ENCODE measurements at regions of chr1 and their contacts with region 1.

Region 1: DNA sequence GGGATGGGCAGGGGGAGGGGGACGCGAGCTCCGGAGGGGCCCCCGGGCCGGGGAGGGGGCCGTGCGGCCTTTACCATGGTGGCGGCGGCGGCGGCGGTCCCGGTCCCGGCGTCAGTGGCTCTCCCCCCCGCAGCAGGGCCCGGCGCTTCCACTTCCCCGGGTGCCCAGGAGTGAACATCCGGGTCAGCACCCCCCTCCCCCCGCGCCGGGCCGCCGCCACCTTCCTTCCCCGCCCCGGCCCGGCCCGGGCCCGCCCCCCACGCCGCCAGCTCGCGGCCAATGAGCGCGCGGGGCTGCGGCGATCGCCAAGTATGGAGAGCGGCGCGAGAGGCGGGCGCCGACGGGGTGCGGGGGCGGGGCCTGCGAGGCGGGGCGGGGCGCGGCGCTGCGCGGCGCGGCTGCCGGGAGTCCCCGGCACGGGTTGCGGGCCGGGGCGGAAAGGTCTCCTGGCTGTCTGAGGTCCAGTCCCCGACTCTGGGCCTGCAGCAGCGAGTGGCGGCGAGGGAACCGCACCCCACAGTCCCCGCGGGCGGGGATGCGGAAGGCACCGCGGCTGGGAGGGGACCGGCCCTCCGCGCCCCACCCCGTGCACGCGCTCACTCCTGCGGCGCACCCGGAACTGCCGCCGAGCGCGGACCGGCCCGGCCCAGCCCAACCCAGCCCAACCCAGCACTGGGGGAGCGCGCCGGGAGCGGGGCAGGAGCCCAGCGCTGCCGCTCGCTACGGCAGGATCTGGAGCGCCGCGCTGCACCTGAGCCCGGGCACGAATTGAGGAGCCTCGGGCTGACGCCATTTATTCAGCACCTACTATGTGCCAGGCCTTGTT is at the start of gene CAPZB:
- DNase-seq: peak; percentile 57 to 90
- H3K4me3 ChIP-seq: peak within 1 kb of the TSS; percentile 75
- H3K27ac ChIP-seq: peak within 1 kb of the TSS; percentile 72
- H3K4me1 ChIP-seq: peaks cover 26% of the 10 kb centered on the region
- H3K27me3 ChIP-seq: no peaks in the 10 kb centered on the region
- CTCF ChIP-seq: no peak
- total RNA-seq, gene CAPZB: 222 and 274 TPM in 2 replicates

Region 2: DNA sequence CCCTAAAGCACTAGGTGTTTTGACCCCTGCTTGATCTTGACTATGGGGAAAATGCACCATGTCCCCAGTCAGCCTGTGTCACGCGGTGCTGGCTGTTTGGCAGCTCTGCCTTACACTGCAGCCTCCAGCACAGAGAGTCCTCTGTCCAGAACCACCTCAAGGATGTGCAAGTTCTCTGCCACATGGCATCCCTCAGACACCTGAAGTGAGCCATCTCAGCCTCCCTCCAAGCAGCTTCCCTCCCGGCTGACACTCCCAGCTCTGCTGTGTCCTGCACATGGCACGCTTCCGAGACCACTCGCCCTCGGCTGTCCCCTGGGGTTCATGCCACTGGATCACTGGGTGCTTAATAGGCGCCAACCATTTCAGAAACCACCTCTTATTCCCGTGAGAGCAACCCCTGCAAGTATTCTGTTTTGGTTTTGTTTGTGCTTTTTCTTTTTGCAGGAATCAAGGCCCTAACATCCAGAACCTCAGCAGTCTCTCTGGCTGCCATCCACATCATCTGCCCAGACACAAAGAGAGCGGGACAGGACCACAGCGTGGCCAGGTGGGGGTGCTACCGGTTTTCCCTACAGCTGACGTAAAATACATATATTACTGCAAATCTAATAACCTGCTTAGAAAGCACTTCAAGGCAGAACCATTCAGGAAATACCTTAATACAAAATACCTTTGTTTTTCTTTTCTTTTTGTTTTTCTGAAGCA is 46.0 kb before region 1 on chr1:
- CTCF ChIA-PET with region 1: no interaction called
- POLR2A ChIA-PET with region 1: interaction called, 18 read pairs
- intact Hi-C with region 1: no loop called
- DNase-seq: no peak
- H3K4me3 ChIP-seq: no peak overlapping the region
- H3K27ac ChIP-seq: no peak overlapping the region
- H3K4me1 ChIP-seq: peaks cover 14% of the 10 kb centered on the region
- H3K27me3 ChIP-seq: no peaks in the 10 kb centered on the region
- CTCF ChIP-seq: no peak

Region 3: DNA sequence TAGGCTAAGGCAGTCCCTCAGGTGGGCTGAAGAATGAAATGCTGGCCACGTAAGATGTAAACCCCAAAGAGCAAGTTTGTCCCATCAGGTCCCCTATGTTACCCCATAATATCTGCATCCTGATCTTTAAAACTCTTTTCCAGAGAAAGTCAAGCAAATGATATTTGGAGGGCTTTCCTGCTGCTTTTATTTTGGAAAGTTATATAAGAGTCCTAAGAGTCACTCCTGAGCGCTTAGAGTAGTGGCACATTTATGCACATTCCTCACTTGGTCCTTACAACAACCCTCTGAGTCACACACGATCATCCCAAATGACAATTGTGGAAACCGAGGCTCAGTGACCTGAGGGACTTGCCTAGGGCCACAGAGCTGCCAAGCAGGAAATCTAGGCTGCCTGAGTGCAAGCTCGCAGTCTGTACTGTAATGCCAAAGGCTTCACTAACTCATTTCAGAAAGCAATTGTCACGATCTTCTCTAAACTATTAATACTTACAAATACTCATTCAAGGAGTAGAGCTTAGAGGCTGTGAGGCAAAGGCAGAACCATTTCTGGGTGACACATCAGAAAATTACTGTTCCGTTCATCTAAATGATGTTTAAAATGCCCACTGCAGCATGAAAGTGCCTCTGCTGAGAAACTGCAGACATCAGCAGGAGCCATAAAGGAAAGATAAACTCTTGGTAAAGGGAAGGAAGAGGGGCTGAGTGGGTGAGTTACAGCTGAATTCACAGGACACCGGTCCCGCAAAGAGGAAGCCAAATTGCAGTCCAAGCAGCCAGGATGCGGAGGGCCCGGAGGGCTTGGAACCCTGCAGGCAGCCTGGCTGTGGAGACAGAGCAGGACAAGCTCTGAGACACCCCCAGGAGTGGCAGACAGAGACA is 31.1 kb before region 1 on chr1:
- CTCF ChIA-PET with region 1: no interaction called
- POLR2A ChIA-PET with region 1: no interaction called
- intact Hi-C with region 1: no loop called
- DNase-seq: no peak
- H3K4me3 ChIP-seq: no peak overlapping the region
- H3K27ac ChIP-seq: no peak overlapping the region
- H3K4me1 ChIP-seq: peaks cover 14% of the 10 kb centered on the region
- H3K27me3 ChIP-seq: no peaks in the 10 kb centered on the region
- CTCF ChIP-seq: no peak

Region 4: GRCh38 chr1:19468397-19468956 is 17.1 kb before region 1 on chr1:
- CTCF ChIA-PET with region 1: no interaction called
- POLR2A ChIA-PET with region 1: interaction called, 17 read pairs
- intact Hi-C with region 1: no loop called
- DNase-seq: peak in 1 of 2 experiments; percentile 48
- H3K4me3 ChIP-seq: no peak overlapping the region
- H3K27ac ChIP-seq: no peak overlapping the region
- H3K4me1 ChIP-seq: peaks cover 16% of the 10 kb centered on the region
- H3K27me3 ChIP-seq: no peaks in the 10 kb centered on the region
- CTCF ChIP-seq: no peak

Region 5: GRCh38 chr1:19596714-19597495 is 111.3 kb after region 1 on chr1:
- CTCF ChIA-PET with region 1: no interaction called
- POLR2A ChIA-PET with region 1: interaction called, 5 read pairs
- intact Hi-C with region 1: loop called (anchors 5 kb)
- DNase-seq: peak; percentile 92 to 94
- H3K4me3 ChIP-seq: peak overlapping the region; percentile 74
- H3K27ac ChIP-seq: peak overlapping the region; percentile 84
- H3K4me1 ChIP-seq: peaks cover 18% of the 10 kb centered on the region; the same call in 1 of the 2 replicates
- H3K27me3 ChIP-seq: no peaks in the 10 kb centered on the region
- CTCF ChIP-seq: no peak

Region 6: GRCh38 chr1:19793360-19794046 is 307.9 kb after region 1 on chr1:
- CTCF ChIA-PET with region 1: no interaction called
- POLR2A ChIA-PET with region 1: no interaction called
- intact Hi-C with region 1: no loop called
- DNase-seq: no peak
- H3K4me3 ChIP-seq: no peak overlapping the region
- H3K27ac ChIP-seq: no peak overlapping the region
- H3K4me1 ChIP-seq: 0 out of 2 replicates have a peak, but pooled peaks cover 2% of the 10 kb centered on the region
- H3K27me3 ChIP-seq: no peaks in the 10 kb centered on the region
- CTCF ChIP-seq: no peak